CD8-positive, alpha-beta memory T cell (primary cell): ENCODE measurements at regions of chr1 and their contacts with region 1.

Region 1: DNA sequence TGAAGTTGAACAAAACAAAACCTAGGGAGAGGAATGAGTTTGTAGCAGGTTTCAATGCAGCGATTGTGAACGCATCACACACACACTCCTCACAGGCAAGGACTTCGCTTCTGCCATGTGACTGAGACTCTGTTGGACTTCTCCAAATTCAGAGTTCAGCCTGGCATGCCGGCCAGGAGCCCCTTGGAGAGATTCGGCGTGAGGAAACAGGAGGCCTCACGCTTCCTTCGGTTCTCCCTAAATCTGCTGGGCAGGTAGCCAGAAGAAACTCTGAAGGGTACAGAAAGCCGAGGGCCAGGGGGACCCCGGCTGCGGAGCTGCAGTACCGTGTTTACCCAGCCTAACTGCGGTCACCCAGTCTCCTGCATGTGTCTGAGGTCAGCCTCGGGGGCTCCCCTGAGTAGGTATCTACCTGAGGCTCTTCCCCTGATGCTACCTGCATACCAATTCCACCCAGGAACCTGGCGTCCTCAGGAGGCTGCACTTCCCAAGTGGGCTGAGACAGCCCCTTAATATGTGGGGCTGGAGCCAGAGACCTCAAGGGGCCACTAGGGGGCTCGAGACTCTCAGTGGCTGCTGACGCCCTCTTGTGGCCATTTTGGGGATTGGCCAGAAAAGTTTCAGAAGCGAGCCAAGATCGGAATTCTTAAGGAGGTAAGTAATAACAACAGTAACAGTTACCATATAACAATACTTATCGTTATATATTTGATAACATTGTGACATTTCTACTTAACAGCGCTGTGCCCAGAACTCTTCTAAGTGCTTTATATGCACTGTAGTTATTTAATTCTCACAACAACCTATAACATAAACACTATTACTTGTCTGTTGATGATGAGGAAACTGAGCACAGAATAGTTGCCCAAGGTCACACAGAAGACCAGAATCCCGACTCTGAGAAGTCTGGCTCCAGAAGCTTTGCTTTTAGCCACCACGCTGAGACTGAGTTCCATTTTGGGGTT is 2.7 kb upstream of the ANXA9 start:
- DNase-seq: peak; percentile 80 to 91 (median 84)
- H3K4me3 ChIP-seq: peak overlapping the region; percentile 35
- H3K4me3 Mint-ChIP-seq: peak overlapping the region in 6 of 7 donors; percentile 25 to 82 (median 44)
- H3K27ac ChIP-seq: peak overlapping the region; percentile 48
- H3K27ac Mint-ChIP-seq: peak overlapping the region in 6 of 8 donors; percentile 38 to 81 (median 64)
- H3K4me1 ChIP-seq: peaks cover 33% of the 10 kb centered on the region
- H3K4me1 Mint-ChIP-seq: peaks cover 30 to 37% (median 36%) of the 10 kb centered on the region in 3 donors
- H3K27me3 ChIP-seq: no peaks in the 10 kb centered on the region
- H3K27me3 Mint-ChIP-seq: no peaks in the 10 kb centered on the region

Region 2: GRCh38 chr1:150629115-150629928 is 350.1 kb before region 1 on chr1 and contains the start of gene ENSA:
- CTCF ChIA-PET with region 1: no interaction called
- POLR2A ChIA-PET with region 1: interaction called, 10 read pairs
- DNase-seq: peak; percentile 94 to 99 (median 98)
- H3K4me3 ChIP-seq: peak within 1 kb of the TSS; percentile 75
- H3K4me3 Mint-ChIP-seq: no peak within 1 kb of the TSS
- H3K27ac ChIP-seq: peak within 1 kb of the TSS; percentile 92
- H3K27ac Mint-ChIP-seq: peak within 1 kb of the TSS in 1 of 8 donors; percentile 80
- H3K4me1 ChIP-seq: peaks cover 21% of the 10 kb centered on the region
- H3K4me1 Mint-ChIP-seq: peaks cover 10 to 21% (median 19%) of the 10 kb centered on the region in 3 donors
- H3K27me3 ChIP-seq: no peaks in the 10 kb centered on the region
- H3K27me3 Mint-ChIP-seq: no peaks in the 10 kb centered on the region
- total RNA-seq, gene ENSA: 249 to 252 TPM

Region 3: DNA sequence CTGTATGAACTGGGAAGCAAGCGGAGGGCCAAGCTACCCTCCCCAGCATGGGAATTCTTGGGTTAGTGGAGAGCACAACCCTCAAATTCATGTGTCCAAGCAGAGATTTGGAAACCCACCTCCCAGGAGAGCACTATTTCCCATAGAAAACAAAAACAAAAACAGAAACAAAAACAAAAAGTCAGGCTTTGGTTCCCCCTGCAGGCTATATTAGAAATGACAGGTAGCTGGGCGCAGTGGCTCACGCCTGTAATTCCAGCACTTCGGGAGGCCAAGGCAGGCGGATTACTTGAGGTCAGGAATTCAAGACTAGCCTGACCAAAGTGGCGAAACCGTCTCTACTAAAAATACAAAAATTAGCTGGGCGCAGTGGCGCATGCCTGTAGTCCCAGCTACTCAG is 16.5 kb after region 1 on chr1:
- CTCF ChIA-PET with region 1: interaction called, 46 read pairs
- POLR2A ChIA-PET with region 1: no interaction called
- DNase-seq: peak in 2 of 5 donors; percentile 23 to 40
- H3K4me3 ChIP-seq: no peak overlapping the region
- H3K4me3 Mint-ChIP-seq: peak overlapping the region in 1 of 7 donors; percentile 67
- H3K27ac ChIP-seq: no peak overlapping the region
- H3K27ac Mint-ChIP-seq: peak overlapping the region in 5 of 8 donors; percentile 22 to 93 (median 63)
- H3K4me1 ChIP-seq: peaks cover 24% of the 10 kb centered on the region
- H3K4me1 Mint-ChIP-seq: peaks cover 5 to 7% (median 6%) of the 10 kb centered on the region in 3 donors
- H3K27me3 ChIP-seq: no peaks in the 10 kb centered on the region
- H3K27me3 Mint-ChIP-seq: peaks cover 2 to 8% of the 10 kb centered on the region in 2 donors